Breast epithelium (tissue), 4 donors: ENCODE measurements at regions of chr4 and their contacts with region 1.

Region 1: DNA sequence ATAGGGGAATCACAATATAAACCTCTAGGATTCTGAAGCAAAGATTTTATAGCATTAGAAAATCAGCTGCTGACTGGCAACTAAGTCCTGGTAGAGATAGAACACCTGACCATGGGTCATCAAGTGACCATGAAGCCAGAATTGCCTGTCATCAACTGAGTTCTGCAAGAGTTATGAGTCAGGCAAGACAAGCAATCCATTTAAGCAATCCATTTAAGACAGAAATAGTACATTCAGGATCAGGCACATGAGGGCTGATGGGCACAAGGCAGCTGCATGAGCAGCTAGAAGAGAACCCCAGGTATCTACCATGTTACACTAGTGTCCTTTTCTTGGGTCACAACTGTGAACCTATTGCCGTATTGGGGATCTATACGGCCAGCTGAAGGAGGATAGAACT is 98.9 kb downstream of the SPRY1 start:
- DNase-seq: no peak
- H3K4me3 ChIP-seq: no peak overlapping the region
- H3K27ac ChIP-seq: no peak overlapping the region
- H3K4me1 ChIP-seq: no peaks in the 10 kb centered on the region
- H3K27me3 ChIP-seq: no peaks in the 10 kb centered on the region
- CTCF ChIP-seq: no peak
- POLR2A ChIP-seq: no peak

Region 2: DNA sequence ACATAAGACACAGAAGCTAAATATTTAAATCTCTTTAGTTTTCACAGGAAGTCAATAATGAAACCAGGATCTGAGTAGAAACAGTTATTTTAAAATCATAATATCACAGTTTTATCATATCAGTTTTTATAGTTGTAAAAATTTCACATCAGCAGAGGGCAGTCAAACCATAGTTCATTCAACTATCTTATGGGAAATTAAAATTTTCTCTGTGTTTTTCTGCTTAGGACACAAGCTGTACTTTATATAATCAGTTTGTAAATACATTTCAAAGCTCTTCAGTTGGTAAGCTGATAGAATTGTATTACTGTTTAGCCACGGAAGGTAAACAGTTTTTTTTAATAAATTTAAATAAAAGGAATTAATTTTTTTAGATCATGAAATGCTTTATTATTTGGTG is 368.3 kb before region 1 on chr4:
- intact Hi-C with region 1: loop called (anchors 5 kb)
- DNase-seq: no peak
- H3K4me3 ChIP-seq: no peak overlapping the region
- H3K27ac ChIP-seq: peak overlapping the region in 1 of 2 donors; percentile 15
- H3K4me1 ChIP-seq: no peaks in the 10 kb centered on the region
- H3K27me3 ChIP-seq: no peaks in the 10 kb centered on the region
- CTCF ChIP-seq: peak in 2 of 3 donors; percentile 24 to 27
- POLR2A ChIP-seq: no peak

Region 3: DNA sequence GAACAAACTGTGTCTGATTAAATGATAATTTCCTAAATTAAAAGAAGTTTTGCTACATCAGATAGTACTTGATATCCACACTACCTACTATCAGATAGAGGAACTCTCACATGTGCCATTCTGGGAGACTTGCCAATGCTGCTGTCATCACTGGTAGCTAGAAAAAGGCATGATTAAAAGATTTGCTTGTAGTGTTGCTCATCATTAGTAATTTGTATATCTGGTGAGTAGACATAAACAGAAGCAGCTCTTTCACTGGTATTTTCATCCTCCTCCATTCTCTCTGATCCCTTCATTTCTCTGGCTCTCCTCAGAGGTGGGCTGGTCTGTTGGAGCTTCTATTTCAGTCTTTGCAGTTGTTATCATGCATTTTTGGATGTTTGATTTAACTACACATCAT is 42.9 kb before region 1 on chr4:
- intact Hi-C with region 1: no loop called
- DNase-seq: no peak
- H3K4me3 ChIP-seq: no peak overlapping the region
- H3K27ac ChIP-seq: peak overlapping the region in 1 of 2 donors; percentile 30
- H3K4me1 ChIP-seq: no peaks in the 10 kb centered on the region
- H3K27me3 ChIP-seq: no peaks in the 10 kb centered on the region
- CTCF ChIP-seq: no peak
- POLR2A ChIP-seq: no peak